Activated CD4-positive, alpha-beta T cell treated with anti-CD3 and anti-CD28 coated beads, Interleukin-2, amount 10 ng/mL, durations not matched to agents 24 days and 14 days (primary cell): ENCODE measurements at regions of chr19 and their contacts with region 1.

Region 1: DNA sequence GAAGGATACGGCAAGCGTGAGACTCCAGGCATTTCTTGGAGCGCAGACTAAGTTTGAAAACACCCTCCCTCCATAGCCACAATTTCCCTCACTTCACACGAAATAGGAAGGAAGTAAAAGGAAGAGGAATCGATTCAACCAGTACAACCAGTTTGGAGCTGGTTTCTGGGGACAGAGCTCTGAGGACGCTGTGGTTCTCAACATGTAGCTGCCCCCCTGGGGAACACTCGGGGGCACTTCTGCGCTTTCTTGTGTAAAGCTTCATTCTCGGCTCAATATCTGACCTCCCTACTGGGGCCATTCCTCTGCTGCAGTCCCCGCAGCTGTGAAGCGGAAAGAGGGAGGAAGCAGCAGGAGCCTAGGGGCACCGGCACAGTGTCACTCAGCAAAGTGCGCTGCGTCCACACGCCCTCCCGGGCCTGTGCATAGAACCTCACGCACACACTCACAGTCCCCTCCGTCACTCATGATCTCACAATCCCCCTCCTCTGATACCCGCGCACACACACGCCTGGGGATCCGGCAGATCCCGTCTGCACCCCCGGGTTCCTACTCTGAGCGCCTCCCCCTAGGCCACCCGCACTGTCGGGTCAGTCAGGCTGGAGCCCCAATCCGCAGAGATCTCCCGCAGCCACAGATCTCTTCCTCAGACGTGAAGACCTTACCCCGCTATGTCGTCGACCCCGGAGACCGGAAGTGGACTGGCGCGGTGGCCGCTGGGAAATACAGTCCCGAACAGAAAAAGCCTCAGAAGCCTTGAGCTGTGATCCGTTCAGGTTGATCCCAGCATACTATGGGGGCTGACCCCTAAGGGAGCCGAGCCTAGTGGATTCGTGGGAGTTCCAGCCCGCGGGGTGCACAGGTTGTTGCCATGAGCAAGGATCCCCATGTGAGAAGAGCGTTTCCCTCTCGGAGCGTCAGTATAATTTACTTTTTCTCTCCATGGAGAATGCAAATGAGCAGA is at the start of gene ZNF780A:
- DNase-seq: peak; percentile 94
- H3K4me3 Mint-ChIP-seq: peak within 1 kb of the TSS; percentile 97
- H3K27ac Mint-ChIP-seq: peak within 1 kb of the TSS; percentile 97
- H3K4me1 Mint-ChIP-seq: peaks cover 25% of the 10 kb centered on the region
- H3K27me3 Mint-ChIP-seq: peaks cover 3% of the 10 kb centered on the region
- total RNA-seq, gene ZNF780A: 14.7 and 16.1 TPM in 2 replicates

Region 2: GRCh38 chr19:39996811-39997594 is 93.5 kb before region 1 on chr19 and contains the start of gene ZNF546:
- intact Hi-C with region 1: loop called (anchors 1 kb)
- DNase-seq: peak; percentile 97
- H3K4me3 Mint-ChIP-seq: peak within 1 kb of the TSS; percentile 90
- H3K27ac Mint-ChIP-seq: peak within 1 kb of the TSS; percentile 95
- H3K4me1 Mint-ChIP-seq: peaks cover 24% of the 10 kb centered on the region
- H3K27me3 Mint-ChIP-seq: no peaks in the 10 kb centered on the region
- total RNA-seq, gene ZNF546: 4.4 and 6.7 TPM in 2 replicates